ENCODE measurements at regions of chr9 and their contacts with region 1.

Region 1: GRCh38 chr9:112315331-112316257 is 17.8 kb downstream of the PTBP3 start:
- DNase-seq: no peak
- ATAC-seq: no peak
- H3K4me3 ChIP-seq: no peak overlapping the region
- H3K27ac ChIP-seq: no peak overlapping the region
- H3K4me1 ChIP-seq: peaks cover 0 to 49% (median 15%) of the 10 kb centered on the region in 9 donors
- H3K27me3 ChIP-seq: no peaks in the 10 kb centered on the region
- CTCF ChIP-seq: no peak

Region 2: GRCh38 chr9:111178331-111179055 is 1137.1 kb before region 1 on chr9:
- intact Hi-C with region 1: no loop called
- DNase-seq: no peak
- ATAC-seq: peak in 2 of 8 donors; percentile 46 to 58
- H3K4me3 ChIP-seq: no peak overlapping the region
- H3K27ac ChIP-seq: no peak overlapping the region
- H3K4me1 ChIP-seq: peaks cover 0 to 4% (median 0%) of the 10 kb centered on the region in 9 donors
- H3K27me3 ChIP-seq: no peaks in the 10 kb centered on the region
- CTCF ChIP-seq: no peak

Region 3: GRCh38 chr9:112218908-112219307 is 96.7 kb before region 1 on chr9:
- intact Hi-C with region 1: no loop called
- DNase-seq: no peak
- ATAC-seq: no peak
- H3K4me3 ChIP-seq: no peak overlapping the region
- H3K27ac ChIP-seq: no peak overlapping the region
- H3K4me1 ChIP-seq: peaks cover 0 to 9% (median 0%) of the 10 kb centered on the region in 9 donors
- H3K27me3 ChIP-seq: no peaks in the 10 kb centered on the region
- CTCF ChIP-seq: no peak

Region 4: DNA sequence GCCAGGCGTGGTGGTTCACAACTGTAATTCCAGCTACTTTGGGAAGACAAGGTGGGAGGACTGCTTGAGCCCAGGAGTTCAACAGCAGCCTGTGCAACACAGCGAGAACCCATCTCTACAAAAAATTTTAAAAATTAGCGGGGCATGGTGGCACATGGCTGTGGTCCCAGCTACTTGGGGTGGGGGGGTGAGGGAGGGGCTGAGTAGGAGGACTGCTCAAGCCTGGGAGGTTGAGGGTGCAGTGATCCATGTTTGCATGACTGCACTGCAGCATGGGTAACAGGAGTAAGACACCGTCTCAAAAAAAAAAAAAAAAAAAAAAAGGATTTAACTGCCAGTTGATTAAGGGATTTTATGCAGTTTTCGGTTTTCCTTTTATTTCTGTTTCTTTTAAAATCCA is 47.2 kb before region 1 on chr9:
- intact Hi-C with region 1: loop called in 1 of 10 experiments (anchors 10 kb)
- DNase-seq: no peak
- ATAC-seq: no peak
- H3K4me3 ChIP-seq: no peak overlapping the region
- H3K27ac ChIP-seq: no peak overlapping the region
- H3K4me1 ChIP-seq: peaks cover 0 to 8% (median 0%) of the 10 kb centered on the region in 9 donors
- H3K27me3 ChIP-seq: no peaks in the 10 kb centered on the region
- CTCF ChIP-seq: no peak

Region 5: DNA sequence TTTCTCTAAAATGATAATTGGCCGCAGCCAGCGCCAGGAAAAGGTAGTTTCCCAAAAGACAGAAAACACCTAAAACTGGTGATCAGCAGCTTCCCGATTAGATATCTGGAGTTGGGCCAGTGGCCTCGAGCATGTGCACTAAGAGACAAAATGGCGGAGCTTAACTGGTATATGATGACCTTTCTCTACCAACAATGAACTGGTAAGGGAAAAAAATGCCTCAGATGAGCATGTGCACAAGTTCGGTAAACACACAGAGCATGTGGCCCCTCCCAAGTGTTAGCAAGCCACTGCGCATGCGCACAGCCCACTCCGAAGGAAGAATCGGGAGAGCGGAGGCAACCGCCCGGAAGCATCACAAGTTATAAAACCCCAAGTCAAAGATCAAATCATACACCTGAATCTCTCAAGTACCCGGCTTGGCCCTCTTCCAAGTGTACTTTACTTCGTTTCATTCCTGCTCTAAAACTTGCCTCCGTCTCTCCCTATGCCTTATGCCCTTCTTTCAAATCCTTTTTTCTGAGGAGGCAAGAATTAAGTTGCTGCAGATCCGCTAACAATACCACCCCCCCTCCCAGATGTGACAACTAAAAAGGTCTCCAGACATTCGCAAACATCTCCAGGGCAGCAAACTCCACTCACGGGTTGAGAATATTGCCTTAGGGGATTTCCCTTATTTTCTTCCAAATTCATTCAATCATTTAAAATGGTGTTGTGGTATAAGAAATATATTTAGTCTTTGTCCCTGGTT is 32.8 kb after region 1 on chr9:
- intact Hi-C with region 1: no loop called
- DNase-seq: peak; percentile 82 to 91
- ATAC-seq: peak; percentile 75 to 94 (median 84)
- H3K4me3 ChIP-seq: peak overlapping the region; percentile 30 to 61 (median 48)
- H3K27ac ChIP-seq: peak overlapping the region in 4 of 10 donors; percentile 9 to 65 (median 43)
- H3K4me1 ChIP-seq: peaks cover 0 to 13% (median 3%) of the 10 kb centered on the region in 9 donors
- H3K27me3 ChIP-seq: no peaks in the 10 kb centered on the region
- CTCF ChIP-seq: no peak

Measured in heart right ventricle (tissue), 16 donors.